ENCODE measurements at regions of chr4 and their contacts with region 1.

Region 1: GRCh38 chr4:145234091-145234706 is 53.8 kb upstream of the OTUD4 start:
- DNase-seq: peak; percentile 22 to 46
- ATAC-seq: peak; percentile 94 to 96
- H3K4me3 ChIP-seq: no peak overlapping the region
- H3K27ac ChIP-seq: no peak overlapping the region
- H3K4me1 ChIP-seq: no peaks in the 10 kb centered on the region
- CTCF ChIP-seq: peak; percentile 73
- EP300 ChIP-seq: no peak
- POLR2A ChIP-seq: no peak
- RAD21 ChIP-seq: peak; percentile 72 to 78

Region 2: GRCh38 chr4:145333807-145334206 is 99.6 kb after region 1 on chr4:
- CTCF ChIA-PET with region 1: no interaction called
- POLR2A ChIA-PET with region 1: no interaction called
- DNase-seq: no peak
- ATAC-seq: no peak
- H3K4me3 ChIP-seq: no peak overlapping the region
- H3K27ac ChIP-seq: no peak overlapping the region
- H3K4me1 ChIP-seq: no peaks in the 10 kb centered on the region
- CTCF ChIP-seq: no peak
- EP300 ChIP-seq: no peak
- POLR2A ChIP-seq: no peak
- RAD21 ChIP-seq: no peak

Region 3: DNA sequence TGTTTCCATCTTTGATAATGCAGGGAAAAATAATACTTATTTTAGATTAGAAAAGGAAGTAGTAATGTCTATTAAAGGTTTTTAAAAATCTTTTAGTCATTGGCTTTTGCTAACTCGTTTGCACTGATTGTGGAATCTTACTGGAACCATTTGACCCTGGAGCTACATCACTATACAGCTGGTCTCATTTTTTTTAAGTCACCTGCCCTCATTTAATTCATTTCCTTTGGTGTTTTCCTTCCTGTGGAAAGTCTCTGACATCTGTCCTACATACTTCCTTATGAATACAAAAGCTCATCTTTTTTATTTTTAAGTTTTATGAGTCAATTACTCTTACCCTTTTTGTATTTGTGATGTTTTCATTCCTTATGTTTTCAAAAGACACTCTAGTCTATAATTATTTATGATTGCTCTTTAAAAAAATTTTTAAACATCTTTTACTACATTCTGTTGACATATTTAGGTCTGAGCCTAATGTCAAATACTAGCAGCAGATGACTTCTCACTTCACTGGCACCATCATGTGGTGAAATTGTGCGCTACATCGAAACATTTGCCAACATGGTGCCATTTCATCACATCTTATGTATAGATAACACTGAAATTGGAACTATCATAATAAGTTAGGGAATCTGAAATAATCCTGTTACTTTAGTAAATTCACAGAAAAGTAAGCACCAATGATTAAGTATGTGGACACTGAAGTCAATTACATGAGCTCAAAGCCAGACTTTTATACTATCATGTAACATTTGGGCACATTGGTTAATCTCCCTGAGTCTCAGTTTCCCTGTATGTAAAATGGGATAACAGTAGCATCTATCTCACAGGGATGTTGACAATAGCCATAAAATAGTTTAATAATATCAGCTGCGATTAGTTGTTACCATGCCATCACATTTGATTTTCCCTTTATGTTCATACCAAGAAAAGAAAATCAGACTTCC is 375.6 kb after region 1 on chr4:
- CTCF ChIA-PET with region 1: interaction called, 43 read pairs
- POLR2A ChIA-PET with region 1: no interaction called
- DNase-seq: peak; percentile 10 to 64
- ATAC-seq: peak; percentile 47 to 59; a peak in 1 of 6 replicates
- H3K4me3 ChIP-seq: no peak overlapping the region
- H3K27ac ChIP-seq: no peak overlapping the region
- H3K4me1 ChIP-seq: no peaks in the 10 kb centered on the region
- CTCF ChIP-seq: peak; percentile 76
- EP300 ChIP-seq: no peak
- POLR2A ChIP-seq: no peak
- RAD21 ChIP-seq: peak; percentile 77 to 79

Region 4: DNA sequence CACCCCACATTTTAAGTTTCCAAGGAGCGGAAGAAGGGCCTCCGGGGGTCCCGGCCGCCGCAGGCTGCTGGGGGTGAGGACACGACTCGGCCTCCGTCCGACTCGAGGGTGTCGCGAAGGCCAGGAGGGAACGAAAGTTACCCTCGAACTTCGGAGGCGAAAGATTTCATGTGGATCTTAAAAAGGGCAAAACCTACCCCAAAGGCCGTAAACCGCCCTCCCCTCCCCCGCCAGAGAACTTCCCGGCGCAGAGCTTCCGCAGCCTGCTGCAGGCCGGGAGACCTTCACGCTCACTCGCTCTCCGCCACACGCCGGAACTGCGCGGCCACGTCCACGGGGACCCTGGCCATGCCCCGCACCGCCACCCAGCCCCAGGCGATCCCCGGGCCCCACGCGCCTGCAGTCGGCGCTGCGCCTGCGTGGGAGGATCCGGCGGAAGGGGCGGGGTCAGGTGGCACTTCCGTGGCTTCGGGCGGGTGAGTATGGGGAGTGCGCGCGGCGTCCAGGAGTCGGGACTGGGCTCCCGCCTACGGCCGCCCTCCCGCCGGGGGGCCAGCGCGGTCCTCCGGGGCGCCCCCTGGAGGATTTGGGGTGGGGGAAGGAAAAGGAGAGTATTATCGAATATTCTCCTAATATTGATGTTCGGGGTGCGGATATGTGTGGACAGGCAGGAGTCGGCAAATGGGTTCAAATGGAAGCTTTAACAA is 384.9 kb after region 1 on chr4 and contains the start of gene MMAA:
- CTCF ChIA-PET with region 1: interaction called, 43 read pairs
- POLR2A ChIA-PET with region 1: no interaction called
- DNase-seq: peak; percentile 74 to 92
- ATAC-seq: peak; percentile 96 to 99
- H3K4me3 ChIP-seq: peak within 1 kb of the TSS; percentile 74
- H3K27ac ChIP-seq: peak within 1 kb of the TSS; percentile 95 to 96
- H3K4me1 ChIP-seq: peaks cover 22% of the 10 kb centered on the region
- CTCF ChIP-seq: peak; percentile 68
- EP300 ChIP-seq: no peak
- POLR2A ChIP-seq: peak; percentile 90
- RAD21 ChIP-seq: peak; percentile 28 to 45; a peak in 4 of 5 replicates
- polyA plus RNA-seq, gene MMAA: 2.6 and 4.0 TPM in 2 replicates